ENCODE measurements at regions of chr10 and their contacts with region 1.

Region 1: GRCh38 chr10:80498833-80499741 is 38.6 kb upstream of the SH2D4B start:
- DNase-seq: peak; percentile 97
- ATAC-seq: peak; percentile 92
- H3K4me3 ChIP-seq: no peak overlapping the region
- H3K27ac ChIP-seq: peak overlapping the region; percentile 84
- H3K4me1 ChIP-seq: peaks cover 38% of the 10 kb centered on the region
- H3K27me3 ChIP-seq: no peaks in the 10 kb centered on the region
- CTCF ChIP-seq: no peak
- POLR2A ChIP-seq: no peak
- RAD21 ChIP-seq: peak; percentile 28; the same call in 1 of the 2 replicates

Region 2: DNA sequence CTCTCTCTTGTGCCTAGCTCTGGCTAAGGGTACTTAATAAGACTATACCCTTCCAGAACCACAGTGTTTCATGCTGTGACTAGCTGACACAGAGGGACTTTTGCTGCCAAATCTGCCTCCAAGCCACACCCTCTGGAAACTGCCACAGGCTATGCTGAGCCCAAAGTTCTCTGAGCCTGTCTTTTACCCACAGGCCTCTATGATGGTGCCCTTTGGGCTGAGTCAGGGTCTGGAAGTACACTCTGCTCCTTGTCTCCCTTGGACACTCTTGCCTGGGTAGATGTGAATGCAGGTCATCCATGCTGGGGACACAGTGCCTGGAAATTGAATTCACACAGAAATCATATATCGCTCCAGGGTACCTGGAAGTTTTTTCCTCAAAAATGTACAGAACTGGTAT is 165.1 kb before region 1 on chr10:
- CTCF ChIA-PET with region 1: no interaction called
- POLR2A ChIA-PET with region 1: no interaction called
- dilution Hi-C with region 1: no loop called
- in situ Hi-C with region 1: no loop called
- intact Hi-C with region 1: no loop called
- DNase-seq: no peak
- ATAC-seq: no peak
- H3K4me3 ChIP-seq: no peak overlapping the region
- H3K27ac ChIP-seq: no peak overlapping the region
- H3K4me1 ChIP-seq: no peaks in the 10 kb centered on the region
- H3K27me3 ChIP-seq: peaks cover 1% of the 10 kb centered on the region; the same call in 1 of the 2 replicates
- CTCF ChIP-seq: no peak
- POLR2A ChIP-seq: no peak
- RAD21 ChIP-seq: no peak

Region 3: DNA sequence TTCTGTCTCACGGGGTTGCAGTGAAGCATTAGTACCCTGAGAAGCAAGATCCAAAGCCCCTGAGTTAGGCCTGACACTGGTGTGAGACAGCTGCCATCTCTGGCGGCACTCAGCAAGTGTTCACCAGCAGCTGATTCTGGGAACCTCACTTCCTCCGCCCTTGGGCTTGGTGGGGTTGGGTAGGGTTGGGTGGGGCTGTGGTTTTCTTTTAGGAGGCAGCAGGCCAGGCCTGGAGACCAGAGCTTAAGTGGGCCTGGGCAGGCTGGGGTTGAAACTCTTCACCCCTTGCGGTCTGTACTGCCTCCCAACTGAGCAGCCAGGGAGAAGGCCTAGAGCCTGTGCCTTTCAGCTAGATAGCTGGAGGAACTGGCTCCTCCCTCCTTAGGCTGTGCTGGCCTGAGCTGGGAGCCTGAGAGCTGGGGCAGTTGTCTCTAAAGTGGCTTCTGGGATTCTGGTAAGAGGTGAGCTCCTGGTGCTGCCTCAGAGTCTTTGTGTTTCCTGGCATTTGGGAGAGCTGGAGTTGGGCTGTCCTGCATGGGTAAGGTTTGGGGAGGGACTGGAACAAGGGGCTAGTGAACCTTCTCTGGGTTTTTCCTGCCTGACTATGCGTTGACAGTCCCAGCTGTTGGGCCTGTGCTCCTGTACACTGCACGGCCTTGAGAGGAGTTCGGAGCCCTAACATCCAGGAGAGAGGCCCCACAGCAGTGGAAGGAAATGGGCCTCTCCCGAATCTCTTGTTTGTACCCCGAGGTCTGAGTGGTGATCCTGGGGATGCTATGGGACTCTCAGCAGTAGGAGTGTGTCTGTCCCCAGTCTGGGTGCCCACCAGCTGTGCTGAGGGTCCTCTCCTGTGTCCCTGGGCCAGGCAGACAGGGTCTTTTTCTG is 39.8 kb before region 1 on chr10:
- CTCF ChIA-PET with region 1: interaction called, 20 read pairs
- POLR2A ChIA-PET with region 1: no interaction called
- dilution Hi-C with region 1: no loop called
- in situ Hi-C with region 1: loop called (anchors 5 kb)
- intact Hi-C with region 1: loop called (anchors 5 kb)
- DNase-seq: no peak
- ATAC-seq: peak; percentile 16; the same call in 1 of the 2 replicates
- H3K4me3 ChIP-seq: no peak overlapping the region
- H3K27ac ChIP-seq: 0 out of 2 replicates have a peak overlapping the region, but pooled peaks have one; percentile 9
- H3K4me1 ChIP-seq: peaks cover 47% of the 10 kb centered on the region
- H3K27me3 ChIP-seq: no peaks in the 10 kb centered on the region
- CTCF ChIP-seq: no peak
- POLR2A ChIP-seq: no peak
- RAD21 ChIP-seq: no peak

Region 4: DNA sequence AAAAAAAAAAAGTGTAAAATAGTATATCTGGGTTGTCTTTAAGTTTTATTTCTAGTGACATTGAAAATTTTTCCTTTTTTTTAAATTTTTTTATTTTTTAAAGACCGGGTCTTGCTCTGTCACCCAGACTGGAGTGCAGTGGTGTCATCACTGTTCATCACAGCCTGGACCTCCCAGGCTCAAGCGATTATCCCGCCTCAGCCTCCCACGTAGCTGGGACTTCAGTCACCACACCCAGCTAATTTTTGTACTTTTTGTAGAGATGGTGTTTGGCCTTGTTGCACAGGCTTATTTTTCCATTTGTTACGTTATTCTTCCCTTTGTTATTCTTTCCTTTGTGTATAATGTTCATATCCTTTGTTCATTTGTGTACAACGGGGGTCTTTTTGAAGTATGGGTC is 14.8 kb before region 1 on chr10:
- CTCF ChIA-PET with region 1: no interaction called
- POLR2A ChIA-PET with region 1: interaction called, 14 read pairs
- dilution Hi-C with region 1: no loop called
- in situ Hi-C with region 1: no loop called
- intact Hi-C with region 1: no loop called
- DNase-seq: no peak
- ATAC-seq: no peak
- H3K4me3 ChIP-seq: no peak overlapping the region
- H3K27ac ChIP-seq: no peak overlapping the region
- H3K4me1 ChIP-seq: peaks cover 2% of the 10 kb centered on the region
- H3K27me3 ChIP-seq: no peaks in the 10 kb centered on the region
- CTCF ChIP-seq: no peak
- POLR2A ChIP-seq: no peak
- RAD21 ChIP-seq: no peak

Region 5: GRCh38 chr10:80509403-80510161 is 10.5 kb after region 1 on chr10:
- CTCF ChIA-PET with region 1: interaction called, 5 read pairs
- POLR2A ChIA-PET with region 1: interaction called, 10 read pairs
- dilution Hi-C with region 1: no loop called
- in situ Hi-C with region 1: no loop called
- intact Hi-C with region 1: no loop called
- DNase-seq: peak; percentile 81
- ATAC-seq: peak; percentile 64
- H3K4me3 ChIP-seq: no peak overlapping the region
- H3K27ac ChIP-seq: peak overlapping the region; percentile 43; the same call in 1 of the 2 replicates
- H3K4me1 ChIP-seq: peaks cover 25% of the 10 kb centered on the region
- H3K27me3 ChIP-seq: no peaks in the 10 kb centered on the region
- CTCF ChIP-seq: no peak
- POLR2A ChIP-seq: no peak
- RAD21 ChIP-seq: no peak

Region 6: GRCh38 chr10:80702143-80702542 is 203.1 kb after region 1 on chr10:
- CTCF ChIA-PET with region 1: no interaction called
- POLR2A ChIA-PET with region 1: no interaction called
- dilution Hi-C with region 1: no loop called
- in situ Hi-C with region 1: no loop called
- intact Hi-C with region 1: no loop called
- DNase-seq: no peak
- ATAC-seq: no peak
- H3K4me3 ChIP-seq: no peak overlapping the region
- H3K27ac ChIP-seq: no peak overlapping the region
- H3K4me1 ChIP-seq: no peaks in the 10 kb centered on the region
- H3K27me3 ChIP-seq: no peaks in the 10 kb centered on the region
- CTCF ChIP-seq: no peak
- POLR2A ChIP-seq: no peak
- RAD21 ChIP-seq: no peak